ENCODE measurements at regions of chr1 and their contacts with region 1.

Region 1: DNA sequence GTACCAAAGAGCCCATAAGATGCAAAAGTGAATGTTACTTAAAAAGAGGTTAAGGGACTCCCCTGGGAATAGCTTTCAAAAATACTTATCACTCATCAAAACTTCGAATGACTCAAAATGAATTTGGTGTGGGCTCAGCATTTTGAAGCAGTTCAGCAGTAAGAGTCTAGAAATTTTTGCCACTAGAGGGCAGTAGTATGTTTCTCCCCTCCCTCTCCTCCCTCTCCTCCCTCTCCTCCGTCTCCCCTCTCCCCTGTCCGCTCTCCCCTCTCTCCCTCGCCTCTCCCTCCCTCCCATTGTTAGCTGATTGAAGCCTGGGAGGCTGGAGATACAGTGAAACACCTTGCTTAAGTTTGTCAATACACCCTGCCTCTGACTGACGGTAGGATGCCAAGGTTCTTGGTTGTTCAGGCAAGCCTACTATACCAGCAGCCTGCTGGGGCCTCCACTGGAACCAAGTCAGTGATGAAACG is 70.8 kb upstream of the TENT5C start:
- DNase-seq: peak; percentile 63
- H3K4me3 ChIP-seq: peak overlapping the region in 1 of 8 donors; percentile 14
- H3K27ac ChIP-seq: no peak overlapping the region
- H3K4me1 ChIP-seq: peaks cover 0 to 36% (median 6%) of the 10 kb centered on the region in 6 donors
- H3K27me3 ChIP-seq: peaks cover 0 to 6% (median 0%) of the 10 kb centered on the region in 7 donors
- CTCF ChIP-seq: peak; percentile 45 to 79 (median 73)
- POLR2A ChIP-seq: no peak

Region 2: DNA sequence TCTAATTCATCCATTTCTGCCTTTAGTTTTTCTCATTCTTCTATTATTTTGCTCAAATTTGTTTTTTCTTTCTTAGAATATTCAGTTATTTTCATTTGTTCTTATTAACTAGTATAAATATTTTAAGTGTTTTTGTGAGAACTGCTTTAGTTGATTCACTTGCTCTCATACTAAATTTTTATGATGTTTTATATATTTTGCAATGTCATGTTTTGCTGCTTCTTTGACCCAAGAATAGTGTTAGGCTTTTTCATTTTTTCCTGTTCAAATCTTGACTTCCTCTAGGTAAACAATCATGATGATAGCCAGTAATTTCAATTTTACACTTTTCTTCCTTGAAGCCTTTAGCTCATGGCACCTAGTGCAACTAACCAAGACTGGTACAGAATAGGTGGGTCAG is 122.6 kb before region 1 on chr1:
- intact Hi-C with region 1: no loop called
- DNase-seq: no peak
- H3K4me3 ChIP-seq: no peak overlapping the region
- H3K27ac ChIP-seq: no peak overlapping the region
- H3K4me1 ChIP-seq: no peaks in the 10 kb centered on the region
- H3K27me3 ChIP-seq: no peaks in the 10 kb centered on the region
- CTCF ChIP-seq: no peak
- POLR2A ChIP-seq: no peak

Region 3: GRCh38 chr1:117473063-117473462 is 62.0 kb before region 1 on chr1:
- intact Hi-C with region 1: no loop called
- DNase-seq: no peak
- H3K4me3 ChIP-seq: no peak overlapping the region
- H3K27ac ChIP-seq: no peak overlapping the region
- H3K4me1 ChIP-seq: no peaks in the 10 kb centered on the region
- H3K27me3 ChIP-seq: no peaks in the 10 kb centered on the region
- CTCF ChIP-seq: no peak
- POLR2A ChIP-seq: no peak

Region 4: GRCh38 chr1:117674521-117675397 is 139.7 kb after region 1 on chr1:
- intact Hi-C with region 1: loop called (anchors 5 kb)
- DNase-seq: no peak
- H3K4me3 ChIP-seq: no peak overlapping the region
- H3K27ac ChIP-seq: peak overlapping the region in 1 of 8 donors; percentile 15
- H3K4me1 ChIP-seq: peaks cover 0 to 38% (median 24%) of the 10 kb centered on the region in 6 donors
- H3K27me3 ChIP-seq: no peaks in the 10 kb centered on the region
- CTCF ChIP-seq: peak; percentile 19 to 71 (median 57)
- POLR2A ChIP-seq: no peak

Region 5: GRCh38 chr1:117758444-117759316 is 223.6 kb after region 1 on chr1:
- intact Hi-C with region 1: loop called (anchors 2 kb)
- DNase-seq: peak; percentile 81
- H3K4me3 ChIP-seq: peak overlapping the region in 7 of 8 donors; percentile 10 to 56 (median 22)
- H3K27ac ChIP-seq: peak overlapping the region in 2 of 8 donors; percentile 24 to 39
- H3K4me1 ChIP-seq: peaks cover 0 to 18% (median 12%) of the 10 kb centered on the region in 6 donors
- H3K27me3 ChIP-seq: peaks cover 0 to 15% (median 4%) of the 10 kb centered on the region in 7 donors
- CTCF ChIP-seq: peak; percentile 58 to 88 (median 78)
- POLR2A ChIP-seq: no peak

Measured in spleen (tissue), 13 donors.